Naive thymus-derived CD4-positive, alpha-beta T cell (primary cell): ENCODE measurements at regions of chr2 and their contacts with region 1.

Region 1: DNA sequence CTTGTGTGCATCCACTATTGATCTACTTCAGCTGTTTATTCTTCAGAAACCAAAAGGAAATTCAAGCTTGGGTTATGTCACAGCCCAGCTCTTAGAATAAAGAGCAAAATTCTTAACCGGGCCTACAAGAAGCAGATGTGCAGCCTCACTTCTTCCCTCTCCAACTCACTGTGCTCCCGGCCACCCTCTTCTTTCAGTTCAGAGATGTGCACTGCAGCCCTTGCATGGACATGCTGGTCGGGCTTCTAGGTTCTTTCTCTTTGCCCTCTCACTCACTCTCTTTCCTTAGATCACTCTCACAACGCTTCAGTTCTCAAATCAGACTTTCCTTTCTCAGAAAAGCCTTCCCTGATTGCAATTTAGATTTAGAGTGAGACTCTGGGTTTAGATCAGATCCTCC is 104.1 kb downstream of the CHN1 start:
- DNase-seq: peak in 8 of 9 donors; percentile 8 to 42 (median 26)
- ATAC-seq: peak; percentile 33
- H3K4me3 ChIP-seq: no peak overlapping the region
- H3K4me3 Mint-ChIP-seq: peak overlapping the region; percentile 1 to 95 (median 78)
- H3K27ac ChIP-seq: peak overlapping the region; percentile 76
- H3K27ac Mint-ChIP-seq: peak overlapping the region; percentile 76 to 97 (median 93)
- H3K4me1 ChIP-seq: peaks cover 0 to 17% of the 10 kb centered on the region in 2 donors
- H3K4me1 Mint-ChIP-seq: peaks cover 6 to 45% (median 29%) of the 10 kb centered on the region in 7 donors
- H3K27me3 ChIP-seq: no peaks in the 10 kb centered on the region
- H3K27me3 Mint-ChIP-seq: no peaks in the 10 kb centered on the region

Region 2: DNA sequence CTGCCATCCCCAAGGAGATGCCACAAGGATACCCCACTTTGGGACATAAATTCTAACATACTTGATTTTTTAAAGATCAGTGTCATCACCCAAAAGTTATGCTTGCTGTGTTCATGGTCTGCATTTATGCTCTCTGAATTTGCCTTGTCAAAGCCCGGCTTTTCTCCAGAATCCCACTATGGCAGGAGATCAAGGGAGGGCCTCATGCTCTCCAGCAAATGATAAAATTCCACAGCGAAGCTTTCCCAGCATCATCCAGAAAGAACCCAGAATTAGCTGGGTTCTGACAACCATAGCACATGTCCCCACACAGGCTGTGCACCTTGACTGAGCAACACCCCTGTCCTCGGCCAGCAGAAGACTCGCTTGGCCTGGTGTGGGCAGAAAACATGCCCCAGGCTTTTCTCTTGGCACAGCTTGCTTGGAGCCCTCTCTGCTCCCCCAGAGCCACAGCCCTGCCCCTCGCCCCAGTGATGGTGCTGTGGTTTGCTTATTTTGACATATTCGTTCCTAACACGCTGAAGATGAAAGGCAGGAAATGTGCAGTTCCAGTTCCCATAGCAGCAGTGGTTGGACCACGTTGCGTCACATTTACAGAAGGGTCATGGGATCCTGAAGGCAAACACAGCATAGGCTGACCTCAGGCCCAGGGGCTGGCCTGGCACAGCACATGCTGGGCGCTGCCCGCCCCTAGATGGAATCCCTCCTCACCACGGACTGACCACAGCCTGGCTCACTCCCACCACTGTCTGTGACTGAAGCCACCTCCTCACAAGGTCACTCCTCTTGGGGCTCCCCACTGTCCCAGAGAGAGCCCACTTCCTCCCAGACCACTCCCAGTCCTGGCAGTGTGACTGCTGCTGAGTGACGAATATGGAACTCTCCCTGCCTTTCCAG is 122.7 kb before region 1 on chr2:
- CTCF ChIA-PET with region 1: no interaction called
- POLR2A ChIA-PET with region 1: no interaction called
- intact Hi-C with region 1: loop called (anchors 1 kb)
- DNase-seq: peak; percentile 51 to 93 (median 91)
- ATAC-seq: peak; percentile 93
- H3K4me3 ChIP-seq: peak overlapping the region; percentile 3
- H3K4me3 Mint-ChIP-seq: peak overlapping the region; percentile 53 to 84 (median 72)
- H3K27ac ChIP-seq: peak overlapping the region; percentile 61
- H3K27ac Mint-ChIP-seq: peak overlapping the region; percentile 55 to 97 (median 95)
- H3K4me1 ChIP-seq: peaks cover 28 to 39% of the 10 kb centered on the region in 2 donors
- H3K4me1 Mint-ChIP-seq: peaks cover 34 to 60% (median 46%) of the 10 kb centered on the region in 7 donors
- H3K27me3 ChIP-seq: no peaks in the 10 kb centered on the region
- H3K27me3 Mint-ChIP-seq: no peaks in the 10 kb centered on the region

Region 3: GRCh38 chr2:174959787-174960186 is 58.7 kb after region 1 on chr2:
- CTCF ChIA-PET with region 1: no interaction called
- POLR2A ChIA-PET with region 1: no interaction called
- intact Hi-C with region 1: loop called in 1 of 2 experiments (anchors 5 kb)
- DNase-seq: no peak
- ATAC-seq: no peak
- H3K4me3 ChIP-seq: no peak overlapping the region
- H3K4me3 Mint-ChIP-seq: no peak overlapping the region
- H3K27ac ChIP-seq: no peak overlapping the region
- H3K27ac Mint-ChIP-seq: peak overlapping the region in 1 of 9 donors; percentile 4
- H3K4me1 ChIP-seq: no peaks in the 10 kb centered on the region
- H3K4me1 Mint-ChIP-seq: peaks cover 0 to 4% (median 3%) of the 10 kb centered on the region in 7 donors
- H3K27me3 ChIP-seq: no peaks in the 10 kb centered on the region
- H3K27me3 Mint-ChIP-seq: peaks cover 0 to 11% (median 0%) of the 10 kb centered on the region in 5 donors